ENCODE measurements at regions of chr17 and their contacts with region 1.

Region 1: DNA sequence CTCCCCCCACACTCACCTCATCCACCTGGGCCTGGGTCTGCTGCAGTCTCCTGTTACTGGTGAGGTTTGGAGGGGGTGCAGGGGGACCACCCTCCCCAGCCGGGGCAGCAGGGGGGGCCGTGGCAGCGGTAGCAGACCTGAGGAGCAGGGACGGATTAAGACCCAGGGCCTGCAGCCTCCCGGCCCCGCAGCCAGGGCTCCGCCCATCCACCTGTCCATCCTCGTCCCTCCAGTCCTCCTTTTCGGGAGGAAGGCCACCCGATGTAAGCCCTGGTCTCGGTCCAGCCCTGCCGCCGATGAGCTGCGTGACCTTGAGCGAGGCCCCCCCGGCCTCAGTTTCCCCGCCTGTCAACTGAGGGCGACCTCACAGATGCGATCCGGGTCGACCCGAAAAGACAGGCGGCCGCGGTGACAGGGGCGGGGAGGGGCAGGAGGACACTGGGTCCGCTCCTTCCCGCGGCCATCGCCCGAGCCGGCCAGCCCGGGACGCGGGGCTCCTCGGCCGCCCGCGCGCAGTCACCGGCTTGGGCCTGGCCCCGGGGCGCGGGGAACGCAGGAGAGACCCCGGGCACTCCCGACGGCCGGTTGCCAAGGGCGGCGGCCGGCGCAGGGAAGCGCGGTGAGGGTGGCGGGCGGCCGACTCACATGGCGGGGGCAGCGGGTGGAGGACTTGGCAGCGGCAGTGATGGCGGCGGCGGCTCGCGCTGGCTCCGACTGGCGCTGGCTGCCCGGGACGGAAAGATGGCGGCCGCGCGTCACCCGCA is at the start of gene VAMP2:
- DNase-seq: peak; percentile 55
- H3K4me3 Mint-ChIP-seq: peak within 1 kb of the TSS; percentile 78
- H3K27ac Mint-ChIP-seq: peak within 1 kb of the TSS; percentile 94
- H3K4me1 Mint-ChIP-seq: peaks cover 38% of the 10 kb centered on the region
- H3K27me3 Mint-ChIP-seq: no peaks in the 10 kb centered on the region
- CTCF ChIP-seq: no peak
- total RNA-seq, gene VAMP2: 37.7 and 42.8 TPM in 2 replicates

Region 2: DNA sequence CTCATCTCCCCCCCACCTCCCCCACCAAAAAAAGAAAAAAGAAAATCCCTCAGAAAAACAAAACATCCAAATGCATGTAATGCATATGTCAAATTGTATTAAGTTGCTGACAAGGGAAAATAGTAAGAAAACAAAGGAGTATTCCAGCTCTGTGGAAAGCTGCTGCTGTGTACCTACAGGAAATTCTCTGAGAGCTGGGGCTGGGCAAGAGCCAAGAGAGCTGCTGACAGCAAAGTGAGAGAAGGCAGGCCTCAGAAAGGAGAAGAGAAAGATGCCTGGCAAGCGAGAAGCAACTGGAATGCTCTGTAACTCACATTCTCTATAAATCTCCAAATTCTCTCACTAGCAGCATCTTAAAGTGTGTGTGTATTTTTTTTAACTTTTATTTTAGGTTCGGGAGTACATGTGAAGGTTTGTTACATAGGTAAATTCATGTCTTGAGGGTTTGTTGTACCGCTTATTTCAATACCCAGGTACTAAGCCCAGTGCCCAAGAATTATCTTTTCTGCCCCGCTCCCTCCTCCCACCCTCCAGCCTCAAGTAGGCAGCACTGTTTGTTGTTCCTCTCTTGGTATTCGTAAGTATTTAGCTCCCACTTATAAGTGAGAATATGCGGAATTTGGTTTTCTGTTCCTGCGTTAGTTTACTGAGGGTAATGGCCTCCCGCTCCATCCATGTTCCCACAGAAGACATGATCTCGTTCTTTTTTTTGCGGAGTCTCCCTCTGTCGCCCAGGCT is 206.0 kb before region 1 on chr17:
- CTCF ChIA-PET with region 1: no interaction called
- POLR2A ChIA-PET with region 1: no interaction called
- intact Hi-C with region 1: no loop called
- DNase-seq: no peak
- H3K4me3 Mint-ChIP-seq: no peak overlapping the region
- H3K27ac Mint-ChIP-seq: no peak overlapping the region
- H3K4me1 Mint-ChIP-seq: peaks cover 6% of the 10 kb centered on the region
- H3K27me3 Mint-ChIP-seq: no peaks in the 10 kb centered on the region
- CTCF ChIP-seq: no peak

Region 3: DNA sequence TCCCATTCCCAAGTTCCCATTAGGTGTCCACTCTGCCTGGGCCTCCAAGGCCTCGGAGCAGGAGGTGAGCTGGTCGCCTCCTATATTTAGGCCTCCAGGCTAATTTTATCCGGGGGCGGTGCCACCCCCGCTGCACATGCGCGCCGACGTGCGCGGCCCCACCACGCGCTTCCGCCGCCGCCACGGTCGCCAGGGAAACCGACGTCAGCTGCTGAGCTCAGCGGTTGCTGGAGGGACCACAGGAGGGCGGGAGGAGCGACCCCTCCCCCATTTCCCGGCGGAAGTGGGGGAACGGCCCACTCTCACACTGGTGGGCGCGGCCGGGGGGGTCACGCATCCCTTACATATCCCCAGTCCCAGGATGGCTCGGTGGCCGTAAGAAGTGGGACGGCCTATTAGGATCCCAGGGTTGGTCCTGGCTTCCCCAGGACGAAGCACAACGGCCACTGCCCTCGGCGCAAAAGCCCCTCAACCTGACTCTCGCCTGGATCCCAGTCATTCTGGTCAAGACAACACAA is 11.2 kb before region 1 on chr17:
- CTCF ChIA-PET with region 1: interaction called, 6 read pairs
- POLR2A ChIA-PET with region 1: interaction called, 429 read pairs
- intact Hi-C with region 1: no loop called
- DNase-seq: peak; percentile 69
- H3K4me3 Mint-ChIP-seq: no peak overlapping the region
- H3K27ac Mint-ChIP-seq: no peak overlapping the region
- H3K4me1 Mint-ChIP-seq: peaks cover 33% of the 10 kb centered on the region
- H3K27me3 Mint-ChIP-seq: no peaks in the 10 kb centered on the region
- CTCF ChIP-seq: no peak

Region 4: GRCh38 chr17:8173056-8173870 is 10.8 kb after region 1 on chr17:
- CTCF ChIA-PET with region 1: interaction called, 10 read pairs
- POLR2A ChIA-PET with region 1: interaction called, 148 read pairs
- intact Hi-C with region 1: no loop called
- DNase-seq: peak; percentile 99
- H3K4me3 Mint-ChIP-seq: peak overlapping the region; percentile 91
- H3K27ac Mint-ChIP-seq: peak overlapping the region; percentile 100
- H3K4me1 Mint-ChIP-seq: peaks cover 27% of the 10 kb centered on the region
- H3K27me3 Mint-ChIP-seq: no peaks in the 10 kb centered on the region
- CTCF ChIP-seq: no peak